ENCODE measurements at regions of chr11 and their contacts with region 1.

Region 1: DNA sequence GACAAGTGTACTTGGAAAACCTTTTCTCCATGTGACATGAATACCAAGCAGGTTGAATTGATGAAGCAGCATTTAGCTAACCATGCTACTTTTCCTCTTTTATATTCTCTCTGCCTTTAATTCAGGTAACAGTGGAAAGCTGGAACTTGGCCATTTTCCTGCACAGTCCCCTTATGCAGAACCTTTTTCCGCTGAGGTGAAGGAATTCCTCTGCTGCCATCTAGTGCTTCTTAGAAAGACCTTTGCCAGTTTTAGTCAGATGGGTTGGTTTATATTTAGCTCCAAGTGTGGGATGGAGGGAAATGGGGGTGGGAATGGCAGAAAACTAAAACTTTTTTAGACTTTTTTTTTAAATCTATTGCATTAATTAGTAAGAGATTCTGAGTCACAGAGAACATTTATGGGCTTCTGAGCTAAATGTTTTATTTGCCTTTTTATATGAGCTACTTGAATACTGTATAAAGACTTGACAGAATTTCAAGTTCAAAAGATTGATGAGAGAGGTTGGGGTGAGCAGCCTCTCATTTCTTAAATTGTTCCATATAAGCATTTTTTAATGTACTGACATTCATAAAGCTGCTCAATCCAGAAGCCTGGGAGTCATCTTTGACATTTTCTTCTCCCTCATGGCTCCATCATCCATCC is 153.9 kb upstream of the ZC3H12C start:
- DNase-seq: peak; percentile 54
- ATAC-seq: peak; percentile 83
- H3K4me3 ChIP-seq: no peak overlapping the region
- H3K27ac ChIP-seq: no peak overlapping the region
- H3K4me1 ChIP-seq: no peaks in the 10 kb centered on the region
- H3K27me3 ChIP-seq: no peaks in the 10 kb centered on the region
- CTCF ChIP-seq: peak; percentile 70
- EP300 ChIP-seq: no peak
- POLR2A ChIP-seq: no peak
- RAD21 ChIP-seq: no peak

Region 2: DNA sequence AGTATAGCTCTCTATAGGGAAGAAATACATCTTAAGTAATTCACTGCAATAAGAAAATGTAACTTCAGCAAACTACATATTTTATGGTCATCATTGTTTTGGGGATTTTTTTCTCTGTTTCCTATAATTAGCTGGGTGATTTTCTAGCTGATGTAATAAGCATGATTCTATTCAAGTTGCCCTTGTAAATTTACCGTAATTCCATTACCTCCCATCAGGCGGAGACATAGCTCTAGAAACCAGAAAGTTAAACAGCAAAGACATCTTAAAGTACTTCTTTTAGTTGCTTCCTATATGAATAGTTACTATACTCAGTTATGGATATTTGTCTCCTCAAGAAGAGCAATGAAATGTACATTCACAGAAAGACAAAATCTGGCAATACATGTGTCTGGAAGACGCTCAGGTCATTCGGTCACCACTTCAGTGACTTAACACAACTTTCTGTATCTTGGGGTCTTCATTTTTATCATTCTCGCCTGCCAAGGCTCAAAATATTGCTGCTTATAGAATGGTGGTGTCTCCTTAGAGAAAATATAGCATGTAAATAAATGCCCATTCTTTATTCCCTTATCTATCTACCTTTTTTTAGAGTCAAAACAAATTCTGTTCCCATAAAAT is 86.0 kb before region 1 on chr11:
- CTCF ChIA-PET with region 1: interaction called, 5 read pairs
- POLR2A ChIA-PET with region 1: no interaction called
- in situ Hi-C with region 1: no loop called
- intact Hi-C with region 1: loop called (anchors 1 kb)
- DNase-seq: peak; percentile 15
- ATAC-seq: no peak
- H3K4me3 ChIP-seq: no peak overlapping the region
- H3K27ac ChIP-seq: no peak overlapping the region
- H3K4me1 ChIP-seq: no peaks in the 10 kb centered on the region
- H3K27me3 ChIP-seq: no peaks in the 10 kb centered on the region
- CTCF ChIP-seq: peak; percentile 52
- EP300 ChIP-seq: no peak
- POLR2A ChIP-seq: no peak
- RAD21 ChIP-seq: no peak

Region 3: DNA sequence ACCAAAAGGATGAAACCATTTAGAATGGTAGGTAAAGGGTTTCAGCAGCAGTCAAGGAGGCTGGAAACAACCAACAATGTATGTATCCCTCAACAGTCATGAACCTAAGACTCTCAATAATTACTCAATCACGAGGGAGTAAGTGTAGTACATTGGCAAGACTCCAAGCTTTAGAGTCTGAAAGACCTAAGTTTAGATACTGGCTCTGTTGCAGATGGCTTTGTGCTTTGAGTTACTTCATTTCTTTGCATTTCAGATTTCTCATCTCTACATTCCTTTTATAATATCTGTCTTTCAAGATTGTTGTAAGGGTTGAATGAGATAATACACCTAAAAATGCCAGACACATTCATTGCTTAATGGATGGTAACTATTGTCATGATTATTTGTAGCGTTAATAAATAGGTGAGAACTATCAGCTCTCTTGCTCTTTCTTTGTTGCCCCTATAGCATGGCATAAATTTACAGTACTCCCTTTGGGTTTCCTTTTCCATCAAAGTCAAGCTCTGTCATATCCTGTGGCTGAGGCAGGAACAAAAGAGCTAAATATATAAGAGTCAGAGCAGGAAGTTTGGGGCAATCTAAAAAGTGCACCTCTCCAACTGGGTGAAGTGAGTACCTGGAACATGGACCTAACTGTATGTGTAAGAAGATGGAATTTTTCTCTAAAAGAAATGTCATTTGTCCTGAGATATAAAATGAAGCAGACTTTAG is 74.3 kb before region 1 on chr11:
- CTCF ChIA-PET with region 1: no interaction called
- POLR2A ChIA-PET with region 1: no interaction called
- in situ Hi-C with region 1: no loop called
- intact Hi-C with region 1: no loop called
- DNase-seq: no peak
- ATAC-seq: no peak
- H3K4me3 ChIP-seq: no peak overlapping the region
- H3K27ac ChIP-seq: no peak overlapping the region
- H3K4me1 ChIP-seq: no peaks in the 10 kb centered on the region
- H3K27me3 ChIP-seq: no peaks in the 10 kb centered on the region
- CTCF ChIP-seq: no peak
- EP300 ChIP-seq: no peak
- POLR2A ChIP-seq: no peak
- RAD21 ChIP-seq: no peak

Measured in HepG2 (cell line).